CD4-positive, alpha-beta T cell (primary cell): ENCODE measurements at regions of chr14 and their contacts with region 1.

Region 1: GRCh38 chr14:89625244-89625713 is 208.2 kb upstream of the FOXN3 start:
- DNase-seq: no peak
- ATAC-seq: no peak
- H3K4me3 ChIP-seq: no peak overlapping the region
- H3K4me3 Mint-ChIP-seq: no peak overlapping the region
- H3K27ac ChIP-seq: no peak overlapping the region
- H3K27ac Mint-ChIP-seq: no peak overlapping the region
- H3K4me1 ChIP-seq: peaks cover 35% of the 10 kb centered on the region
- H3K4me1 Mint-ChIP-seq: peaks cover 49% of the 10 kb centered on the region
- H3K27me3 ChIP-seq: no peaks in the 10 kb centered on the region
- H3K27me3 Mint-ChIP-seq: no peaks in the 10 kb centered on the region
- CTCF ChIP-seq: no peak

Region 2: DNA sequence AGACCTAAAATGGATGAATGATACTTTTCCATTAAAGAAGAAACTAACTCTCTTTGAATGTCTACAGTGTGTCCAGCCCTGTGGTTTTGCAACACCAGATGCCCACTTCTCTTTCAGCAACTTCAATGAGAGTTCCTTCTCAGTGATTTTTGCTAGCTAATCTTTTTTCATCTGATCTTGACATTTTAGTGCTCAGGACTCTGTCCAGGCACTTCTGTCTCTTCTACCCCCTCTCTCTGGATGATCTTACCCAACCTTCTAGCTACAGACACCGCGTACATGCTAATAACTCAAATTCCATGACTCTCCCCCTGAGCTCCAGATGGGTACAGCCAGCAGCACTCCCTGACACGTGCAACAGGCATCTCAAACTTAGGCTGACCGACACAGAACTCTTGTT is 47.1 kb before region 1 on chr14:
- CTCF ChIA-PET with region 1: no interaction called
- POLR2A ChIA-PET with region 1: no interaction called
- intact Hi-C with region 1: loop called in 1 of 2 experiments (anchors 10 kb)
- DNase-seq: no peak
- ATAC-seq: no peak
- H3K4me3 ChIP-seq: no peak overlapping the region
- H3K4me3 Mint-ChIP-seq: no peak overlapping the region
- H3K27ac ChIP-seq: no peak overlapping the region
- H3K27ac Mint-ChIP-seq: no peak overlapping the region
- H3K4me1 ChIP-seq: peaks cover 16% of the 10 kb centered on the region
- H3K4me1 Mint-ChIP-seq: peaks cover 73% of the 10 kb centered on the region
- H3K27me3 ChIP-seq: no peaks in the 10 kb centered on the region
- H3K27me3 Mint-ChIP-seq: no peaks in the 10 kb centered on the region
- CTCF ChIP-seq: no peak

Region 3: GRCh38 chr14:89681086-89682018 is 56.1 kb after region 1 on chr14:
- CTCF ChIA-PET with region 1: no interaction called
- POLR2A ChIA-PET with region 1: interaction called, 5 read pairs
- intact Hi-C with region 1: loop called (anchors 1 to 5 kb)
- DNase-seq: peak in 5 of 14 experiments; percentile 9 to 71 (median 66)
- ATAC-seq: peak; percentile 76
- H3K4me3 ChIP-seq: peak overlapping the region; percentile 26
- H3K4me3 Mint-ChIP-seq: peak overlapping the region; percentile 81
- H3K27ac ChIP-seq: peak overlapping the region; percentile 53 to 62
- H3K27ac Mint-ChIP-seq: peak overlapping the region; percentile 92
- H3K4me1 ChIP-seq: peaks cover 30% of the 10 kb centered on the region
- H3K4me1 Mint-ChIP-seq: peaks cover 47% of the 10 kb centered on the region
- H3K27me3 ChIP-seq: no peaks in the 10 kb centered on the region
- H3K27me3 Mint-ChIP-seq: no peaks in the 10 kb centered on the region
- CTCF ChIP-seq: no peak